IMR-90 (cell line): ENCODE measurements at regions of chr7 and their contacts with region 1.

Region 1: DNA sequence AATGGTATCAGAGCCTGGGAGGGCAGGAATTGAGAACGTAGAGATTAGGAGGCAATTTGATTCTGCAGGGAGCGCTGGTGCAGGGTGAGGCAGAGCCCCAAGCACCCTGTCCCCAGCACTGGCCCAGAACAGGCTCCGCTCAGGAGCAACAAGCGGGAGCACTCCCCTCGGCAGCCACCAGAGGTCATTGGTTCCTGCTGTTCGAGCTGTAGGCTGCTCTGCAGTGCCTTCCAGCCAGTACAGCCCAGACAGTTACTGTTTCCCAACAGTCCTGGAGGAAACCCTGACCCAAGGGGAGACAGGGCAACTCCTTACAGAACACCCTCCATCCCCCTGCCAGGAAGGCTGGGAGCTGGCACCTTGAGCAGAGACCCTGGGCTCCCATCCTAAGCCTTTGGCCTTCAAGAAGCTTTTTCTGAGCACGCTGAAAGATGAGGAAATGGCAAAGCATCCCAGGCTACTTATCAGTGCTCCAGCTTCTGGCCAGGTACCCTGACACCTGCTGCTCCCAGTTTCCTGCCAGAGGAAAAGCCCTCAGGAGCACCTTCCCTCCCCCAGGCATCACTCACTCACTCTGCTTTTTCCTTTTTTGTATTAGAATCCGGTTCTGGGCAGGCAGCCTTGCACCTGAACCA is 71.2 kb upstream of the EFCAB10 start:
- DNase-seq: peak; percentile 71
- ATAC-seq: peak; percentile 94
- H3K4me3 ChIP-seq: no peak overlapping the region
- H3K27ac ChIP-seq: no peak overlapping the region
- H3K4me1 ChIP-seq: peaks cover 10% of the 10 kb centered on the region; the same call in 1 of the 2 replicates
- H3K27me3 ChIP-seq: no peaks in the 10 kb centered on the region
- CTCF ChIP-seq: peak; percentile 85
- POLR2A ChIP-seq: no peak
- RAD21 ChIP-seq: peak; percentile 94

Region 2: GRCh38 chr7:105743351-105744090 is 91.0 kb after region 1 on chr7:
- CTCF ChIA-PET with region 1: interaction called, 3 read pairs
- POLR2A ChIA-PET with region 1: no interaction called
- dilution Hi-C with region 1: no loop called
- in situ Hi-C with region 1: no loop called
- intact Hi-C with region 1: loop called (anchors 10 kb)
- DNase-seq: peak; percentile 5
- ATAC-seq: no peak
- H3K4me3 ChIP-seq: no peak overlapping the region
- H3K27ac ChIP-seq: no peak overlapping the region
- H3K4me1 ChIP-seq: no peaks in the 10 kb centered on the region; the same call in 1 of the 2 replicates
- H3K27me3 ChIP-seq: no peaks in the 10 kb centered on the region
- CTCF ChIP-seq: no peak
- POLR2A ChIP-seq: no peak
- RAD21 ChIP-seq: no peak

Region 3: DNA sequence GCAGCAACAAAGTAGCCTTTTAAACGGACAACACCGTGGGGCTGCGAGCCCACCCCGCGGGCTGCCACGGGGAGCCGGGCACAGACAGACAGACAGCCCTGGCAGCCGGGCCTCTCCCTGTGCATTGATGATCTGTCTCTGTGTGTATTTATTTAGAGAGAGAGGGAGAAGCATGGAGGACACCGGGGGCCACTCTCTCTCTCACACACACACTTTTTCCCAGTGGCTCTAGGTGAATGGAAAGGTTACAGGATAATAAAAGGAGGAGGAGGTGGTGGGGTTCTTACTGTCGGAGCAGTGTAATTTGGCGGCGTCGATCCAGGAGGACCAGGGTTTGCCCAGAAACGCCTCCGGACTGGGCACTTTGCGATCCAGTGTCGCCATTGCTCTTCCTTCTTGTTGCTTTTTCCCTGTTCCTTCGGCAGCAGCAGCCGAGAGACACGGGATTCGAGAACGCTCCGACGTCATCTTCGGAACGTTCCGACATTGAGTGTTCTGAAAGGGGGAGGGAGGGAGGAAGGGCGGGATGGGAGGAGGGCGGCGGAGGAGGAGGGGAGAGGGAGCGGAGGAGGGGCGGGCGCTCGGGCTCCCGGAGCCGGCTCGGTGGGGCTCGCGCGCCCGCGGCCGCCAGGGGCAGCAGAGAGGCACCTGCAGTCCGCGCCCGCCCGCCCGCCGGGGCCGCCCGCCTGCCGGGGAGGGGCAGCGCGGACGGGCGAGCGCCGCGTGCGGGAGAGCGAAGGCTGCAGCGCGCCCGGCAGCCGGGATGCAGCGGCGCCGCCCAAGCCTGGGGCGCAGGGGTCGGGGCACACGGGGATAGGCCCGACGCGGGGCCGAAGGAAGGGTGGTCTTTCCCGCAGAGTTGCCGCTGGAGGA is 223.9 kb after region 1 on chr7 and contains the start of gene ATXN7L1:
- CTCF ChIA-PET with region 1: no interaction called
- POLR2A ChIA-PET with region 1: no interaction called
- dilution Hi-C with region 1: no loop called
- in situ Hi-C with region 1: no loop called
- intact Hi-C with region 1: loop called (anchors 1 kb)
- DNase-seq: peak; percentile 98
- ATAC-seq: peak; percentile 97
- H3K4me3 ChIP-seq: peak within 1 kb of the TSS; percentile 82
- H3K27ac ChIP-seq: peak within 1 kb of the TSS; percentile 91
- H3K4me1 ChIP-seq: peaks cover 9% of the 10 kb centered on the region; the same call in 1 of the 2 replicates
- H3K27me3 ChIP-seq: no peaks in the 10 kb centered on the region
- CTCF ChIP-seq: peak; percentile 72
- POLR2A ChIP-seq: peak; percentile 87
- RAD21 ChIP-seq: peak; percentile 49
- total RNA-seq, gene ATXN7L1: 4.3 and 4.7 TPM in 2 replicates

Region 4: DNA sequence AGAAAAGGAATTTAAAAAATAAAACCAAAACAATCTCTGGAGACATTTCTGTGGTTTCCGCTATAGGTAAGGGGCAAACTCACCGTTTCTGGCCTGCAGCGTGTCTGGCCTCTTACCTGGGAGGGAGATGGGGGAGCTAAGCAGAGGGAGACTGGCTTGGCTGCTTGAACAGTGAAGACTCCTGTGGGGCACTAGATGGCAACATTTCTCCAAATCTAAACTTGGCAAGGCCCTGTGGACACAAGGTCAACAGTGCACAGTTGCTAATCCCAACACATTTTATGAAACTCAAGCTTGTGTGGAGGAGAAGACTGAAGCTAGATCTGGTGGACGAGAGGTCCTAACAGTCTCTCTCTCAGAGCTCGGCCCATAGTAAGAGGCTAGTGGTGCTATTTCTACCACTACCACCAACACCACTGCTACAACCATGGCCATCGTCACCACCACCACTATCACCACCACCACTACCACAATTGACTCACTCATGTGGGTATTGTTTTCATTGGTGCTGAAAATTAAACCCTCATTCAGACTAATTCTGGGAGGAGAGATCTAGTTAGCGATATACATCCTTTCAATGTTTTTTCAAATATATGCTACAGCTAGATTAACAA is 282.2 kb after region 1 on chr7:
- CTCF ChIA-PET with region 1: interaction called, 4 read pairs
- POLR2A ChIA-PET with region 1: no interaction called
- dilution Hi-C with region 1: no loop called
- in situ Hi-C with region 1: no loop called
- intact Hi-C with region 1: loop called (anchors 2 kb)
- DNase-seq: peak; percentile 47
- ATAC-seq: peak; percentile 71
- H3K4me3 ChIP-seq: no peak overlapping the region
- H3K27ac ChIP-seq: no peak overlapping the region
- H3K4me1 ChIP-seq: peaks cover 6% of the 10 kb centered on the region; the same call in 1 of the 2 replicates
- H3K27me3 ChIP-seq: peaks cover 4% of the 10 kb centered on the region
- CTCF ChIP-seq: peak; percentile 48
- POLR2A ChIP-seq: no peak
- RAD21 ChIP-seq: peak; percentile 36; the same call in 1 of the 2 replicates

Region 5: GRCh38 chr7:106448992-106449859 is 796.8 kb after region 1 on chr7:
- CTCF ChIA-PET with region 1: no interaction called
- POLR2A ChIA-PET with region 1: no interaction called
- dilution Hi-C with region 1: no loop called
- in situ Hi-C with region 1: no loop called
- intact Hi-C with region 1: no loop called
- DNase-seq: no peak
- ATAC-seq: no peak
- H3K4me3 ChIP-seq: no peak overlapping the region
- H3K27ac ChIP-seq: no peak overlapping the region
- H3K4me1 ChIP-seq: no peaks in the 10 kb centered on the region; the same call in 1 of the 2 replicates
- H3K27me3 ChIP-seq: no peaks in the 10 kb centered on the region
- CTCF ChIP-seq: no peak
- POLR2A ChIP-seq: no peak
- RAD21 ChIP-seq: no peak